ENCODE measurements at regions of chr14 and their contacts with region 1.

Region 1: DNA sequence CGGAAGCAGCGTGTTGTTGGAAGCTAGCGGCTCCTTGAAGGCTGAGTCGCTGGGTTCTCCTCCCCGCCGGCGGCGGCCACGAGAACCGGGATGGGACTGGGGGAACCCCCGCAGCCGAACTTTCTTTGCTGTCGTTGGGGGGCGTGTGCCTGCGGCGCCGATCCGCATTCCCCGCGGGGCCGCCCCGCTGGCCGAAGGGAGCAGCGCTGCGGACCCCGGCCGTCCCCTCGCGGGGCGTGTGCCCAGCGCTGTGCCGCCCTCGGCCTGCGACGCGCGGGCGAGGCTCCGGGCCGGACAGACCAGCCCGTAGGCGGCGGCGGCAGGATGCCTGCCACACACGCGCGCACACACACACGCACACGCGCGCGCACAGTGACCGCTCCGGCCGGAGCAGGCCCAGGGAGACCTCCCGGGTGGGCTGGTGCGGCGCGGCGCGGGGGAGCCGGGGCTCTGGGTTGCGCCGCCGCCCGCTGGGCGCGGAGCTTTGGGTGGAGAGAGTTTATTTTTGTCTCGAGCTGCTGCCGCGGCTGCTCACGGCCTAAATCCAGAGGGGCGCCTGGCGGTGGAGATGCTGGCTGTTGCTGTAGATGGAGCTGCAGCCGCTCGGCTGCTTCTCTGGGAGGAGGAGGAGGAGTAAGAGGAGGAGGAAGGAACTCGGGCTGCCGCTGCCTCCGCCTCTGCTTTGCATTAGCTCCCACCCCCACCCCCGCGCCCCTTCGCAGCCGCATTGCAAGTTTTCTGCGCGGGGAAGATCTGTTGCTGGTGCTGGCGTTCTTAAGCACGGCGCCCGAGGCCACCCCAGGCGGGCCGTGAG is at the start of gene SAMD4A:
- DNase-seq: peak; percentile 83
- H3K4me3 ChIP-seq: peak within 1 kb of the TSS; percentile 82 to 90 (median 85)
- H3K27ac ChIP-seq: peak within 1 kb of the TSS; percentile 84
- H3K4me1 ChIP-seq: peaks cover 40% of the 10 kb centered on the region
- H3K27me3 ChIP-seq: no peaks in the 10 kb centered on the region
- CTCF ChIP-seq: peak; percentile 14 to 46
- total RNA-seq, gene SAMD4A: 42.0 to 48.8 TPM

Region 2: GRCh38 chr14:54366736-54367735 is 199.6 kb before region 1 on chr14:
- CTCF ChIA-PET with region 1: no interaction called
- dilution Hi-C with region 1: no loop called
- in situ Hi-C with region 1: no loop called
- intact Hi-C with region 1: loop called (anchors 10 kb)
- DNase-seq: peak; percentile 44
- H3K4me3 ChIP-seq: no peak overlapping the region
- H3K27ac ChIP-seq: no peak overlapping the region
- H3K4me1 ChIP-seq: peaks cover 9% of the 10 kb centered on the region
- H3K27me3 ChIP-seq: no peaks in the 10 kb centered on the region
- CTCF ChIP-seq: peak; percentile 54 to 69

Region 3: DNA sequence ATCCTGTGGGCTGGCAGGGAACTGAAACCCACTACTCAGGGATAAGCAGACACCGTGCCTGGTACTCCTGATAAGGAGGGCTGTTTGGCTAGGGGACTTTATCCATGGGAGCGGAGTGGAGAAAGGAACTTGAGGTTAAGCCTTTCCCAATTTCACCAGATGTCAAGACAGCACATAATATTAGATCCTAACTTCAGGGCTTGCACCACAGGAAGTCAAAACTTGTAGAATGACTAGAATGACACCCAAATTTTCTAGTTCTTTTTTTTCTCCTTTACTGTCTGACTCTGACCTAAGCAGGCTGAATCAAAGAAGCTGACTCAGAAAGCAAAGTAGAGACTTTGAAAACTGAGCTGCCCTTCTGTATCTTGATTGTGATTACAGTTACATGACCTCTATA is 64.0 kb before region 1 on chr14:
- CTCF ChIA-PET with region 1: no interaction called
- dilution Hi-C with region 1: no loop called
- in situ Hi-C with region 1: no loop called
- intact Hi-C with region 1: no loop called
- DNase-seq: no peak
- H3K4me3 ChIP-seq: no peak overlapping the region
- H3K27ac ChIP-seq: no peak overlapping the region
- H3K4me1 ChIP-seq: no peaks in the 10 kb centered on the region
- H3K27me3 ChIP-seq: no peaks in the 10 kb centered on the region
- CTCF ChIP-seq: no peak

Region 4: GRCh38 chr14:54642801-54643697 is 76.4 kb after region 1 on chr14:
- CTCF ChIA-PET with region 1: no interaction called
- dilution Hi-C with region 1: no loop called
- in situ Hi-C with region 1: no loop called
- intact Hi-C with region 1: loop called (anchors 2 kb)
- DNase-seq: no peak
- H3K4me3 ChIP-seq: no peak overlapping the region
- H3K27ac ChIP-seq: no peak overlapping the region
- H3K4me1 ChIP-seq: no peaks in the 10 kb centered on the region
- H3K27me3 ChIP-seq: no peaks in the 10 kb centered on the region
- CTCF ChIP-seq: peak in 1 of 2 donors; percentile 18

Region 5: DNA sequence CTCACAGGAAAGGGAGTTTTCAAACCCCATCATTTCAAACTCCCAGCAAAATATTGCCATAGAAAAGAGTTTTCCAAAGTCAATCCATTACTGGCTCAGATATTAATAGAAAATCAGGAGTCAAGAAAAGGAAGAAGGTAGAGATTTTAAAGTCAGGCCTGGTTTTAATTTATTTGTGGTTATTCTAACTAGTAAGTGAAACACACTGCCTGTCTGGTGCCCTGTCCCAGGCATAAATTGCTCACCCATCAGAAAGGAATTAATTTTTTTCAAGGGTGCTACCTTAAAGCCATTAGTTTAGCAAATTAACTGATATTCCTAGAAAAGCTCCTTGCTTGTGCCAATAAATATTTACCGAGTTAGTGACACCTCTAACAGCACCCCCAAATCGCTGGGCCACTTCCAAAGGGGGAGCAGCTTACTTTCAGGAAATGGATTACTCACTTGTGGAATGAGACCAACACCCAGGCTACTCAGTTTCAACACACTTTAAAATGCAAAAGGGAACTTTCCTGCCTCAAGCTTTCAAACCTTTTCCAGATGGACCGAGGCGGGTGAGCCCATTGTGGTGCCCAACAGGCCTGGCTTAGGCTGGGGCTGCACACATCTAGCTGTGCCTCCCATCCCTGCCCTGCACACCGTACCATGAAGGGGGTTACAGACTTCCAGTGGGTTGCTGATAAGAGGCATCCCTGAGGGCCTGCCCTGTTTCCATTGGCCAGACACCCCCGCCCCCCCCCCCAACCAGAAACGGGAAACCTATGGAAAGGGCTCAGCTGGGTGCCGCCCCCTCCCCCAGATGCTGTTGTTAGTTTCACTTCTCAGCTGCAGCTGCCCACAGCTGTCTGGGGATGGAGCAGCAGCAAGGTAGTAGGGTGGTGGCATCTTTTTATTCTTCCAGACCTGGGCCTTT is 117.5 kb after region 1 on chr14:
- CTCF ChIA-PET with region 1: interaction called, 12 read pairs
- dilution Hi-C with region 1: loop called (anchors 5 kb)
- in situ Hi-C with region 1: loop called (anchors 5 to 10 kb)
- intact Hi-C with region 1: no loop called
- DNase-seq: peak; percentile 84
- H3K4me3 ChIP-seq: no peak overlapping the region
- H3K27ac ChIP-seq: peak overlapping the region; percentile 73
- H3K4me1 ChIP-seq: peaks cover 63% of the 10 kb centered on the region
- H3K27me3 ChIP-seq: no peaks in the 10 kb centered on the region
- CTCF ChIP-seq: no peak

Region 6: DNA sequence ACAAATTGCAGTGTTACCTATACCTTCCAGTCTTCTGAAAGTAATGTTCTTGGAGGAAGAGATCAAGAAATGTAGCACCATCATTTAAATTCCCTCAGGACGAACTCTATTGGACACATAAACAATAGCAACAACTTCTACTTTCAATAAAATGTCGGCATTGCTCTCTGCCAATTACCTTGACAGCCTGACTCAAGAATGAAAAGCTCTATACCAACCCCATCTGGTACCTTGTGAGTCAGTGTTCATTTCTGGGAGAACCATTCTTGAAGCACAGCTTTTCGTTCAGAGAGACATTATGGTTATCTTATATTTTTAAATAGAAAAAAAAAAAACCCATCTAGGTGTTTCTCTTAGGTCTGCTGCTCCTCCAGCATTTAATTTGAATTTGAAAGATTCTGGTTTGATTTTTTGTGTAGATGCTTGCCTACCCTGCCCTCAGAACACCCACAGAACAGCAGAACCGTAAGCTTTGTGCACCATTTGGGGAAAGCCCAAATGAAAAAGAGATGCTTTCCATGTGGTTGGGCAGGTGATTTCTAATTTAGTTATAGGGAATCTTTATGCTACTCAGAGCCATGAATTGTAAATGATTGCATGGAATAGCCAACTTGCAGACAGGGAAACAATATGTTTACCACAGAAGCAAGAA is 156.3 kb after region 1 on chr14:
- CTCF ChIA-PET with region 1: interaction called, 4 read pairs
- dilution Hi-C with region 1: no loop called
- in situ Hi-C with region 1: no loop called
- intact Hi-C with region 1: loop called (anchors 1 kb)
- DNase-seq: peak; percentile 58
- H3K4me3 ChIP-seq: no peak overlapping the region
- H3K27ac ChIP-seq: no peak overlapping the region
- H3K4me1 ChIP-seq: no peaks in the 10 kb centered on the region
- H3K27me3 ChIP-seq: no peaks in the 10 kb centered on the region
- CTCF ChIP-seq: peak; percentile 52 to 73

Region 7: GRCh38 chr14:54742492-54743350 is 176.1 kb after region 1 on chr14:
- CTCF ChIA-PET with region 1: no interaction called
- dilution Hi-C with region 1: no loop called
- in situ Hi-C with region 1: no loop called
- intact Hi-C with region 1: no loop called
- DNase-seq: no peak
- H3K4me3 ChIP-seq: no peak overlapping the region
- H3K27ac ChIP-seq: no peak overlapping the region
- H3K4me1 ChIP-seq: peaks cover 8% of the 10 kb centered on the region
- H3K27me3 ChIP-seq: no peaks in the 10 kb centered on the region
- CTCF ChIP-seq: no peak

Region 8: GRCh38 chr14:54805521-54806322 is 239.1 kb after region 1 on chr14:
- CTCF ChIA-PET with region 1: interaction called, 17 read pairs
- dilution Hi-C with region 1: no loop called
- in situ Hi-C with region 1: loop called in 1 of 2 experiments (anchors 10 kb)
- intact Hi-C with region 1: loop called (anchors 1 kb)
- DNase-seq: peak; percentile 73
- H3K4me3 ChIP-seq: peak overlapping the region in 1 of 3 experiments; percentile 17
- H3K27ac ChIP-seq: no peak overlapping the region
- H3K4me1 ChIP-seq: peaks cover 13% of the 10 kb centered on the region
- H3K27me3 ChIP-seq: no peaks in the 10 kb centered on the region
- CTCF ChIP-seq: peak; percentile 89 to 93

Region 9: GRCh38 chr14:54981698-54982097 is 415.1 kb after region 1 on chr14:
- CTCF ChIA-PET with region 1: no interaction called
- dilution Hi-C with region 1: no loop called
- in situ Hi-C with region 1: no loop called
- intact Hi-C with region 1: loop called (anchors 1 kb)
- DNase-seq: no peak
- H3K4me3 ChIP-seq: no peak overlapping the region
- H3K27ac ChIP-seq: no peak overlapping the region
- H3K4me1 ChIP-seq: peaks cover 3% of the 10 kb centered on the region
- H3K27me3 ChIP-seq: no peaks in the 10 kb centered on the region
- CTCF ChIP-seq: peak; percentile 15 to 30

Measured in mammary epithelial cell (primary cell).